ENCODE measurements at regions of chr1 and their contacts with region 1.

Region 1: GRCh38 chr1:200738740-200739498 is at the start of gene CAMSAP2:
- DNase-seq: peak; percentile 93
- total RNA-seq, gene CAMSAP2: 37.9 TPM

Region 2: GRCh38 chr1:200620273-200621131 is 118.4 kb before region 1 on chr1 and contains the start of gene KIF14:
- intact Hi-C with region 1: loop called (anchors 5 kb)
- DNase-seq: peak; percentile 96
- total RNA-seq, gene KIF14: 0.05 TPM

Region 3: GRCh38 chr1:200669314-200670241 is 69.3 kb before region 1 on chr1 and contains the start of gene DDX59:
- intact Hi-C with region 1: loop called (anchors 1 kb)
- DNase-seq: peak; percentile 97
- total RNA-seq, gene DDX59: 17.3 TPM

Region 4: GRCh38 chr1:200774735-200775444 is 36.0 kb after region 1 on chr1:
- intact Hi-C with region 1: loop called (anchors 5 kb)
- DNase-seq: no peak

Region 5: GRCh38 chr1:200802865-200803512 is 64.1 kb after region 1 on chr1:
- intact Hi-C with region 1: loop called (anchors 5 kb)
- DNase-seq: peak; percentile 83

Region 6: GRCh38 chr1:201004732-201005131 is 265.8 kb after region 1 on chr1:
- intact Hi-C with region 1: no loop called
- DNase-seq: no peak

Measured in cardiac septum (tissue), 1 donor.